CD4-positive, alpha-beta T cell (primary cell): ENCODE measurements at regions of chr2 and their contacts with region 1.

Region 1: DNA sequence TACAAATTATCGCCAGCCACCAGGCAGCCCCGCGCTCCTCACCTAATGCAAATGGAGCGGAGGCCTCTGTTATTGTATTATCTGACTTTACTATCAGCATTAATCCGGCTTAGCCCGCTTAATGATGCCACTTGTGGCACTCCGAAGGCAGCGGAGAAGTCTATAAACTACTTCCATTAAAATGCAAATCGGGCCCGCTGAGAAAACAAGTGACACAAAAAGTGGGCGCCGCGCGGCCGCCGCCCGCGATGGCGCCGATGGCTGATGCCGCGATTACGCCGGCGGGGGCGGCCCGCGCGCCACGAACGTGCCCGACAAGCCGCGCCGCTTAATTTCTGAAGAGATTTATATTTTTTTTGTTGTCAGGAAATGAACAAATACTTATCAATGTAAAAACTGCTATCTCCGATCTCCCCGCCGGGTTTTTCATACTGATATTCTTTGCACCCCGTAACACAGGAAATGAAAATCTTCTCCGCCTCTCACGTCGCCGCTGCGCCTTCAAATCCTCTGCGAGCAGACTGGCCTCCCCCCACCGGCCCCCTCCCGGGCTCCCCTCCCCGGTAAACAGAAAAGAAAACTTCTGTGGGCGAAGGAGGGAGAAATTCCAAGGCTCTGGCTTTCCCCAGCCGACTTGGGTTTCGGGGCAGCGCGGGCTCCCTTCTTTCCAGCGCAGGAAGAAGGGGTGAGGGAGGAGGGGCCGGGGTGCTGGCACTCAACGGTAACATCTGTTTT is 221.8 kb downstream of the INSIG2 start:
- DNase-seq: peak; percentile 43 to 83 (median 58)
- ATAC-seq: peak; percentile 83
- H3K4me3 ChIP-seq: peak overlapping the region; percentile 74
- H3K4me3 Mint-ChIP-seq: peak overlapping the region; percentile 95
- H3K27ac ChIP-seq: peak overlapping the region; percentile 70 to 93
- H3K27ac Mint-ChIP-seq: peak overlapping the region; percentile 98
- H3K4me1 ChIP-seq: peaks cover 19% of the 10 kb centered on the region
- H3K4me1 Mint-ChIP-seq: peaks cover 24% of the 10 kb centered on the region
- H3K27me3 ChIP-seq: no peaks in the 10 kb centered on the region
- H3K27me3 Mint-ChIP-seq: no peaks in the 10 kb centered on the region
- CTCF ChIP-seq: no peak

Region 2: DNA sequence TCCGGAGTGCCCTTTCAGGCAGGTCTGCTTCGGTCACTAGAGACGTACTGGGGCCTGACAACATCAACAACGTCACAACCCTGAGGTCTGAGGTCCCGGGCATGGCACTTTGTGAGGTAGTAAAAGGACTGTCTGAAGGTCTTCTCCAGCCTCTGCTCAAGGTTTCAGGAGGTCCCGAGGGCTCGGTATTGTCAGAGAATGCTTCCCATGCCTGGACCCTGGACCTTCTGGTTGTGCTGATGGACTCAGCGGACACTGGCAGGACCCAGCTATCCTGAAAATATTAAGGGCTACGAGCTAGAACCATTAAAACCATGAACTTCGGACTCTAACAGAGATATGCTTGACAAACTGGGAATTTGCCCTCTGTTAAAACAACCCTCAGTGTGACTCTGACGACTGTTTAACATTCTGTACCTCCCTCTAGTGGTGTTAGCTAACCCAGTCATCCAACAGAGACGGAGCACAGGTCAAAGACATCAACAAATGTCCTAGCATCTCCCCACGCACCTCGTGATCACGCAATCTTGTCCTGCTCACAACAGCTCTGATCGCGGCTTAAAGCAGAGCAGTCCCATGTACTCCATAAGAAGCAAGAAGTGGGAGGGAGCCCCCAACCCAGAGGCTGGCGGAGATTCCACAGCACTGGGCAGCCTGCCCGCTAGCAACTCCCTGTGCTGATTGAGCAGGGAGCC is 392.7 kb before region 1 on chr2:
- CTCF ChIA-PET with region 1: no interaction called
- POLR2A ChIA-PET with region 1: no interaction called
- intact Hi-C with region 1: no loop called
- DNase-seq: no peak
- ATAC-seq: no peak
- H3K4me3 ChIP-seq: no peak overlapping the region
- H3K4me3 Mint-ChIP-seq: no peak overlapping the region
- H3K27ac ChIP-seq: no peak overlapping the region
- H3K27ac Mint-ChIP-seq: no peak overlapping the region
- H3K4me1 ChIP-seq: no peaks in the 10 kb centered on the region
- H3K4me1 Mint-ChIP-seq: no peaks in the 10 kb centered on the region
- H3K27me3 ChIP-seq: no peaks in the 10 kb centered on the region
- H3K27me3 Mint-ChIP-seq: no peaks in the 10 kb centered on the region
- CTCF ChIP-seq: no peak

Region 3: GRCh38 chr2:118013724-118014491 is 296.2 kb before region 1 on chr2 and contains the start of gene CCDC93:
- CTCF ChIA-PET with region 1: no interaction called
- POLR2A ChIA-PET with region 1: interaction called, 3 read pairs
- intact Hi-C with region 1: loop called in 1 of 2 experiments (anchors 10 kb)
- DNase-seq: peak; percentile 73 to 96 (median 84)
- ATAC-seq: peak; percentile 83
- H3K4me3 ChIP-seq: peak within 1 kb of the TSS; percentile 89
- H3K4me3 Mint-ChIP-seq: peak within 1 kb of the TSS; percentile 92
- H3K27ac ChIP-seq: peak within 1 kb of the TSS; percentile 92 to 95
- H3K27ac Mint-ChIP-seq: peak within 1 kb of the TSS; percentile 86
- H3K4me1 ChIP-seq: peaks cover 33% of the 10 kb centered on the region
- H3K4me1 Mint-ChIP-seq: peaks cover 44% of the 10 kb centered on the region
- H3K27me3 ChIP-seq: no peaks in the 10 kb centered on the region
- H3K27me3 Mint-ChIP-seq: no peaks in the 10 kb centered on the region
- CTCF ChIP-seq: no peak
- total RNA-seq, gene CCDC93: 62.2 to 64.5 TPM

Region 4: DNA sequence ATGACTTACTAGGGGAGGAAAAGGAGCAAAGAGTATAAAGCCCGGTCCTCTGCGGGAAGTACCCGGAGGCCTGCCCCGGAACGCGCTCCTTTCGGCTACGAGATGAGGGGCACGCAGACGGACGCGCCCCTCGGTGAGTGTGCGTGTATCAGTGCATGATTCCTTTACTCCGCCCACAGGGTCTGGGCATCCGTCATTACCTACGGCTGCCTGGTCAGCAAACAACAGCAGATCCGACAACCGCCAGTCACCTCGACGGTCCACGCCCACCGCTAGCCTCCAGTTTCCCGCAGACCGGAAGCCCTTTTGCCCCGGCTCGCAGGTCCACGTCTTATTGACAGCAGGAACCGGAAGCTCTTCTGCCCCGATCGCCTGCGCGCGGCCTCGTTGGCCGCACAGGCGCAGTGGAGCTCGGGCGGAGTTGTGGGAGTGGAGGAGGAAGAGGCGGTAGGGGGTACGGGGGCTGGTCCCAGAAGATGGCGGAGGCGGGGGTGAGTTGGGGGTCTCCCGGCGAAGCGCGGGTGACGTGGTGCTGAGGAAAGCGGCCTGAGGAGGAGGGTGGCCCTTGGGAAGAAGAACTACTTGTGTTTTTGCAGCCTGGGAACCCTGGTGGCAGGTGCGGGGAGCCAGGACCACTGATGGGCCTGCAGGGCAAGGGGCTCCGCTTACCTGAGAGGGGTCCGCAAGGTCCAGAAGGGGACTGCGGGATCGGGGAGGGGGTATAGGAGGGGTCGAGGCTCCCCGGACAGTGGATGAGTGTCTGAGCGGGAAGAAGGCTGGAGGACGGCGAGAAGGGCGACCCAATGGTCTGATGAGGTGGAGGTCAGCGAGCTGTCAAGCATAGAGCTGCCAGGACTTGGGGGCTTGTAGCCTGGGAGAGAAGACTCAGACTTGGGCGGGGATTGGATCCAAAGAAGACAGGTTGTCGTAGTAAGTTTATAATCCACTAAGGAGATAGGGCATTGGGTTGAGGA is 221.8 kb before region 1 on chr2 and contains the start of gene INSIG2:
- CTCF ChIA-PET with region 1: no interaction called
- POLR2A ChIA-PET with region 1: interaction called, 3 read pairs
- intact Hi-C with region 1: loop called in 1 of 2 experiments (anchors 10 kb)
- DNase-seq: peak; percentile 71 to 95 (median 81)
- ATAC-seq: peak; percentile 88
- H3K4me3 ChIP-seq: peak within 1 kb of the TSS; percentile 91
- H3K4me3 Mint-ChIP-seq: peak within 1 kb of the TSS; percentile 97
- H3K27ac ChIP-seq: peak within 1 kb of the TSS; percentile 58 to 61
- H3K27ac Mint-ChIP-seq: peak within 1 kb of the TSS; percentile 88
- H3K4me1 ChIP-seq: peaks cover 10% of the 10 kb centered on the region
- H3K4me1 Mint-ChIP-seq: peaks cover 38% of the 10 kb centered on the region
- H3K27me3 ChIP-seq: no peaks in the 10 kb centered on the region
- H3K27me3 Mint-ChIP-seq: no peaks in the 10 kb centered on the region
- CTCF ChIP-seq: no peak
- total RNA-seq, gene INSIG2: 7.3 to 7.7 TPM

Region 5: DNA sequence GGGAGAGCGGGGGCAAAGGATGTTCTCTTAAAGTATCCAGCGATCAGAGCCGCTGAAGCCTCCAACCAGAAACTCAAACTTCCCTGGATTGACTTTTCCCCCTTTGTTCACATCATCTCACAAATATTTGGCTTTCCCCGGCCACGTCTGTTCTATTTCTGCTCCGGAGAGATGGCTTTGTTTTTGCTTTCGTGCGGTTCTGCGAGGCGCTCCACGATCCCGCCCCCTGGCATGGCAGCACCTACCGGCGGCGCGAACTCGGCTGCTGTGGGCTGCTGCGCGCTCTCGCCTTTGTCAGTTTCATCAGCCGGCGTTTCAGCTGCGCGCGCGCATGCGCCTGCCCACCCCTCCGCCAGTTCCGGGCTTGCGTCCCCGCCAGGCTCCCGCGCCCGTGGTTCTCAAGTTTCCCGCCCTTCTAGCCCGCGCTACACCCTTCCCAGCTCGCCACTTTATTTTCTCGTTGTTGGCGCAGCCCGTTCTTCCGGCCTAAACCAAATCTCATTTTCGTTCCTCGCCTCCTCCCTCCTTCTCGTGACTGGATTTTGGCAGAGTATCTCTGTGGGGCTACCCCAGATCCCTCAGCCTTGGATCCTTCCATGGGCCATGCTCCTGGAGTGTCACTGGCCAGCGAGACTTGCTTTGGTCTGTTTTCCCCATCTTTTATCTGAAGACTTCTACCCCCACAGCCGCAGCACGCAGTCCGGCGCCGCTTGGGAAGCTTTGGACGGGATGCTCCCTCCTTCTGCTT is 123.8 kb before region 1 on chr2:
- CTCF ChIA-PET with region 1: no interaction called
- POLR2A ChIA-PET with region 1: interaction called, 10 read pairs
- intact Hi-C with region 1: loop called in 1 of 2 experiments (anchors 5 kb)
- DNase-seq: peak; percentile 70 to 96 (median 86)
- ATAC-seq: peak; percentile 94
- H3K4me3 ChIP-seq: peak overlapping the region; percentile 76
- H3K4me3 Mint-ChIP-seq: peak overlapping the region; percentile 96
- H3K27ac ChIP-seq: peak overlapping the region; percentile 69 to 71
- H3K27ac Mint-ChIP-seq: peak overlapping the region; percentile 87
- H3K4me1 ChIP-seq: peaks cover 18% of the 10 kb centered on the region
- H3K4me1 Mint-ChIP-seq: peaks cover 16% of the 10 kb centered on the region
- H3K27me3 ChIP-seq: no peaks in the 10 kb centered on the region
- H3K27me3 Mint-ChIP-seq: no peaks in the 10 kb centered on the region
- CTCF ChIP-seq: no peak

Region 6: DNA sequence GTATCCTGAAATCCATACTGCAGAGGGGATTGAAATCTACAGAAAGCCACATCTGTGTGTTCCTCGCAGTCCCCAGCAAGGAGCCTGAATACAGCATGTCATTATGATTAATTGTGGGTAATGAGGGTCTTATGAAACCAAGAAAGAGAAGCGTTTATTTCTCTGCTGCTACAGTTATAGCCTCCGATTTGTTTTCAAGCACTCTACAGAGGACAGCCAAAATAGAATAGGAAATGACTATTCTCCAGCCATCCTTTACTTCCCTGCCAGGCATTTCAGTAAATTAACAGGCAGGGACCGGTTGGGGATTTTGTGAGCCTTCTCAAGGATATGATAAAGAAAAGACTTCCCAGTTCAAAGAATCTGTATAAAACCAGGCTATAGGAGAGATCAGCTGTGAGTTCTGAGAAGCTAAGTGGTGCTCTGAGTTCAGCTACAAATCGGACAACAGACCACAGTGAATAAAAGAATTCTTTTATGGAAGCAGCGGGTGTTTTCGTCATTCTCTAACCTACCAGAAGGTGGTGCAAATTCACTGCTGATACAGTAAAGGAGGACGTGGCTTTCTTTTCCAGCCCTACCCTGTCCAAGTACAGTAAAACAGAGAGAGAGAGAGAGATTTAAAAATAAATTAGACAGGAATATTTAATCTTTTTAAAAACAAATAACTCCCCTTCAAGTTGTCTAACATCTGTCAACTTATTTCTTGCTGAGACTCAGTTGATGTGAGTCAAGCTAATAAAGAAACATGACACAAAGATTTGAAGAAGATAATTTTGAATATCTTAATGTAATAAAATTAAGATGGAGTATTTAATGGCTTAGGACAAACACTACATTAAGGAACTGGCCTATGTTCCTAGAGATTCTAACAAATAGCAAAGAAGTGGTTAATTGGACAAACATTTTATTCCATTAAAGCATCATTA is 88.2 kb before region 1 on chr2:
- CTCF ChIA-PET with region 1: no interaction called
- POLR2A ChIA-PET with region 1: interaction called, 3 read pairs
- intact Hi-C with region 1: loop called in 1 of 2 experiments (anchors 5 kb)
- DNase-seq: peak in 9 of 14 experiments; percentile 6 to 77 (median 10)
- ATAC-seq: peak; percentile 75
- H3K4me3 ChIP-seq: no peak overlapping the region
- H3K4me3 Mint-ChIP-seq: peak overlapping the region; percentile 12
- H3K27ac ChIP-seq: no peak overlapping the region
- H3K27ac Mint-ChIP-seq: no peak overlapping the region
- H3K4me1 ChIP-seq: peaks cover 19% of the 10 kb centered on the region
- H3K4me1 Mint-ChIP-seq: peaks cover 28% of the 10 kb centered on the region
- H3K27me3 ChIP-seq: peaks cover 44 to 70% of the 10 kb centered on the region in 2 experiments
- H3K27me3 Mint-ChIP-seq: peaks cover 78% of the 10 kb centered on the region
- CTCF ChIP-seq: peak; percentile 87

Region 7: GRCh38 chr2:118855451-118856279 is 545.6 kb after region 1 on chr2:
- CTCF ChIA-PET with region 1: no interaction called
- POLR2A ChIA-PET with region 1: no interaction called
- intact Hi-C with region 1: loop called in 1 of 2 experiments (anchors 10 kb)
- DNase-seq: peak; percentile 68 to 88 (median 77)
- ATAC-seq: peak; percentile 94
- H3K4me3 ChIP-seq: peak overlapping the region; percentile 42
- H3K4me3 Mint-ChIP-seq: peak overlapping the region; percentile 77
- H3K27ac ChIP-seq: no peak overlapping the region
- H3K27ac Mint-ChIP-seq: no peak overlapping the region
- H3K4me1 ChIP-seq: peaks cover 46% of the 10 kb centered on the region
- H3K4me1 Mint-ChIP-seq: peaks cover 30% of the 10 kb centered on the region
- H3K27me3 ChIP-seq: peaks cover 96 to 98% of the 10 kb centered on the region in 2 experiments
- H3K27me3 Mint-ChIP-seq: peaks cover 95% of the 10 kb centered on the region
- CTCF ChIP-seq: peak; percentile 95